Natural killer cell (primary cell): ENCODE measurements at regions of chr18 and their contacts with region 1.

Region 1: GRCh38 chr18:75364512-75365253 is 62.8 kb downstream of the SMIM21 start:
- DNase-seq: peak in 1 of 2 donors; percentile 6
- ATAC-seq: no peak
- H3K4me3 ChIP-seq: no peak overlapping the region
- H3K4me3 Mint-ChIP-seq: no peak overlapping the region
- H3K27ac ChIP-seq: no peak overlapping the region
- H3K27ac Mint-ChIP-seq: no peak overlapping the region
- H3K4me1 ChIP-seq: no peaks in the 10 kb centered on the region
- H3K4me1 Mint-ChIP-seq: no peaks in the 10 kb centered on the region
- H3K27me3 ChIP-seq: no peaks in the 10 kb centered on the region
- H3K27me3 Mint-ChIP-seq: peaks cover 2 to 9% of the 10 kb centered on the region in 2 donors
- CTCF ChIP-seq: no peak

Region 2: GRCh38 chr18:75097491-75098225 is 267.0 kb before region 1 on chr18:
- intact Hi-C with region 1: no loop called
- DNase-seq: no peak
- ATAC-seq: no peak
- H3K4me3 ChIP-seq: no peak overlapping the region
- H3K4me3 Mint-ChIP-seq: no peak overlapping the region
- H3K27ac ChIP-seq: no peak overlapping the region
- H3K27ac Mint-ChIP-seq: no peak overlapping the region
- H3K4me1 ChIP-seq: no peaks in the 10 kb centered on the region
- H3K4me1 Mint-ChIP-seq: no peaks in the 10 kb centered on the region
- H3K27me3 ChIP-seq: no peaks in the 10 kb centered on the region
- H3K27me3 Mint-ChIP-seq: peaks cover 9 to 13% of the 10 kb centered on the region in 2 donors
- CTCF ChIP-seq: no peak

Region 3: DNA sequence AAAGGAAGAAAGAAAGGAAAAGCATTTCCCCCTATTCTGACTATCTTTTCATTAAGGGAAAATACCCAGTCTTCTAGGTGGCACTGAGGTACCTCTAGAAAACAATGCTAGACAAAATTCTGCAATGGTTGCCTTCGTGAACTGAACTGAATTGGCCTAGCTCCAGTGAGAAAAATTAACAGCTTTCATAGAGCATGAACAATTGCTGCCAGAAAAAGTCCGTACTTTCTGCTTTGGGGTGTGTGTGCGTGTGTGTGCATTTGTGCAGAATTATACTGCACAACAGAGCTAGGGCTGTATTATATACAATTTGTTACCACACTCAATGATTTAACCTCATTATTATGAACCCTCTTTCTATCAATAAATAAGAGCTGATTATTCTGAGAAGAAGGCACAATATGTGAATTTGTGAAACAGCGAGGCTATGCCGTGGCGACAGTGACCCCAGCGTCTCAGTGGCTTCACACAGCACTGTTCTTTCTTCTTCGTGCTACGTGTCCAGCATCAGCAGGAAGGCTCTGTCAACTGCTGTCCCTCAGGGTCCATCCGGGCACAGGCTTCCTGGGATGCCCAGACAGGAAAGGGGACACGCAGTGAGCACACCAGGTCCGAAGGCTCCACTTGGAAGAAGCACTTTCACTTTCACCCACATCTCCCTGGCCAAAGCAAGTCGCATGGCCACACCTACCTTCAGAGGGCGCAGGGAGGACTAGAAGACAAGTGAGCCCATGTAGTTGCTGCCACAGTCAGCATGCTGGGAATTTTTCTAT is 203.2 kb before region 1 on chr18:
- intact Hi-C with region 1: loop called (anchors 10 kb)
- DNase-seq: peak in 1 of 2 donors; percentile 58
- ATAC-seq: peak; percentile 38 to 81 (median 65)
- H3K4me3 ChIP-seq: peak overlapping the region; percentile 35
- H3K4me3 Mint-ChIP-seq: peak overlapping the region; percentile 89
- H3K27ac ChIP-seq: no peak overlapping the region
- H3K27ac Mint-ChIP-seq: peak overlapping the region in 1 of 2 donors; percentile 79
- H3K4me1 ChIP-seq: no peaks in the 10 kb centered on the region
- H3K4me1 Mint-ChIP-seq: peaks cover 13% of the 10 kb centered on the region in 2 donors
- H3K27me3 ChIP-seq: no peaks in the 10 kb centered on the region
- H3K27me3 Mint-ChIP-seq: peaks cover 12 to 26% of the 10 kb centered on the region in 2 donors
- CTCF ChIP-seq: no peak